ENCODE measurements at regions of chr22 and their contacts with region 1.

Region 1: DNA sequence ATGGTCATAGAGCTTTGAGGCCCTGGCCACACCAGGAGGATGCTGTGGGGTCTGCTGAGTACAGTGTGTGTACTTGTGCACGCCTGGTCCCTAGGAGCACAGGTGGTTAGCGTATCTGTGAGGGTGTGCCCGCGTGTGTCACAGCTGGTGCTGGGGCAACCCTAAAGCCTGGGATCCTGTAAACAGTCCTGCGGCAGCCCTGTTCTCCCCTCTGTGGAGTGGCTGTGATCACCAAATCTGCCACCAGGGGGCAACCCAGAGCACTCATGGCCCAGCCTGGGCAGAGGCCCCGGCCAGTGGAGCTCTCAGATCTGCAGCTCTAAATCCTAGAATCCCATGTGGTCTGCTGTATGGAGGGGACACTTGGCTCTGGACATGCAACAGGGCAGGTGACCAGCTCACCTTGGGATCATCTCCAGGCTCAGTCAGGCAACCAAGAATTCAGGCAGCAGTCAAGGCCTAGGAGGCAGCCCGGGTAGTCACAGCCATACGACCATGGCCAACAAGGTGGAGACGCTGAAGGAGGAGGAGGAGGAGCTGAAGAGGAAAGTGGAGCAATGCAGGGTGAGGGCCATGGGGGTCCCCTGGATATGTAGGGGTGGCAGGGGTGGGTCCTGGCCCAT is 3.9 kb downstream of the SH3BP1 start:
- DNase-seq: peak; percentile 69 to 89
- H3K4me3 ChIP-seq: no peak overlapping the region
- H3K27ac ChIP-seq: peak overlapping the region in 1 of 2 donors; percentile 55
- H3K4me1 ChIP-seq: peaks cover 8 to 20% of the 10 kb centered on the region in 2 donors
- H3K27me3 ChIP-seq: no peaks in the 10 kb centered on the region
- CTCF ChIP-seq: peak; percentile 85 to 93 (median 92)
- POLR2A ChIP-seq: no peak

Region 2: DNA sequence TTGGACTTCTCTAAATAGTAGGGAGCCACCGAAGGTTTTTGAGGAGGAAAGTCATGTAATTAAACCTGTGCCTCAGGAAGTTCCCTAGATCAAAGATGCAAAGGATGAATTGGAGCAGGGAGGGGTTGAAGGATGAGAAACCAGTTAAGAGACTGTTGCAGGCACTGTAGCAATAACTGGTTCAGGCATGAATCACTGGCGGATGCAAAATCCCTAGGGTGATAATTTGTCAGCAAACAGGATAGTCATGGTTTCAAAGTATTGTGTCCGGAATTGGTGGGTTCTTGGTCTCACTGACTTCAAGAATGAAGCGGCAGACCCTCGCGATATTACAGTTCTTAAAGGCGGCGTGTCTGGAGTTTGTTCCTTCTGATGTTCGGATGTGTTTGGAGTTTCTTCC is 73.4 kb after region 1 on chr22:
- intact Hi-C with region 1: loop called (anchors 2 kb)
- DNase-seq: no peak
- H3K4me3 ChIP-seq: no peak overlapping the region
- H3K27ac ChIP-seq: no peak overlapping the region
- H3K4me1 ChIP-seq: no peaks in the 10 kb centered on the region
- H3K27me3 ChIP-seq: no peaks in the 10 kb centered on the region
- CTCF ChIP-seq: no peak
- POLR2A ChIP-seq: no peak

Region 3: GRCh38 chr22:38017272-38017920 is 374.1 kb after region 1 on chr22:
- intact Hi-C with region 1: loop called (anchors 5 kb)
- DNase-seq: peak; percentile 87 to 91
- H3K4me3 ChIP-seq: peak overlapping the region in 1 of 3 donors; percentile 42
- H3K27ac ChIP-seq: peak overlapping the region; percentile 88 to 93
- H3K4me1 ChIP-seq: peaks cover 10 to 18% of the 10 kb centered on the region in 2 donors
- H3K27me3 ChIP-seq: no peaks in the 10 kb centered on the region
- CTCF ChIP-seq: no peak
- POLR2A ChIP-seq: no peak